GM10248 (cell line): ENCODE measurements at regions of chr20 and their contacts with region 1.

Region 1: DNA sequence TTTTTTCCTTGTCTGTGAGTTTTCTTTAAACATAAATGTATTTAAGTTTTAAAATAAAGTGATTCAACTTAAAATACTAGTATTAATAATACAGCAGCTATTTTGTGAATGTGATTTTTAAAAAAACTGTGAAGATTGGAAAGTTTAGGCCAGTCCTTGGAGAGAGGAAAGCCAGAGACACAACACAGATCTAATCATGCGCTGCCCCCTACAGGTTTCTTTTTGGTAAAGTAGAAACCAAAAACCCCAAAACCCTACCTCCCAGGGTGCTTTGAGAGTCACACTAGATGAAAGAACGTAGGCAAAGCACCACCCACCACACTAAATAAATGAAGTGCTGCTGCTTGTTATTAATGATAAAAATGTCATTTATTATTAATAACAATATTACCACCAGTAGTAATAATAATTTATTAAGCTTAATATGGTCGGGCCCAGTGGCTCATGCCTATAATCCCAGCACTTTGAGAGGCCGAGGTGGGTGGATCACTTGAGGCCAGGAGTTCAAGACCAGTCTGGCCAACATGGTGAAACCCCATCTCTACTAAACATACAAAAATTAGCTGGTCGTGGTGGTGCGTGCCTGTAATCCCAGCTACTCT is 33.7 kb downstream of the SLC9A8 start:
- DNase-seq: peak; percentile 71
- CTCF ChIP-seq: peak; percentile 46

Region 2: DNA sequence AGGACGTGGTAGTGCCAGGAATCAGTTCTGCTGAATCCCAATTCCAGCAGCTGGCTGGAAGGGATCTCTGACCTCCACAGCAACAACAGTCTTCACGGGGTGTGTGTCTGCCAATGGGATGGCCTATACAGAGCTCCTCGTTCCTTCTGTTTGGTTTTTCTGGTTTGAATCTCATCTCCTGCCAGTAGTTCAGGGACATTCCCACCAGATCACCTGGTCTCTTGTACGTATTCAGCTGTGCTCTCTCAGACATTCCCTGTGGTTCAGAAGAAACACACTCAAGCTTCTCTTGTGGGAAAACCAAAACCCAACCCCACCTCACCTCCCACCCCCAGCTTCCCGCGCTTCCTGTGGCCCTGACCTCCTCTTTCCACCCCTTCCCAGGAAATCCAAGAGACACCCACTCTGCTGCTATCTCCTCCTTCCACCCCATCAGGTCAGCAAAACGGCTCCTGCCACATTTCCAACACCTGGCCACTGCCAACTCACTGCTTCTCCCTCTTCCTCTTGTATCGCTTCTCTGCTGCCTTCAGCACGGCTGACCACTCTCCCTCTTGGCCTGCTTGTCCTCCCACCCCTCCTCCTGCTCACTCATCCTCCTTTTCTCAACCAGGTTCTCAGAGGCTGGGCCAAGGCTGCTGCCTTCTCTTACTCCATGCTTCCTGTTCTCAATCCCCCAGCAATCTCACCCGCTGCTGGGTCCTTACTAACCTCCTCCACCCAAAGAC is 215.1 kb before region 1 on chr20:
- CTCF ChIA-PET with region 1: interaction called, 10 read pairs
- POLR2A ChIA-PET with region 1: no interaction called
- DNase-seq: peak; percentile 60
- CTCF ChIP-seq: no peak

Region 3: DNA sequence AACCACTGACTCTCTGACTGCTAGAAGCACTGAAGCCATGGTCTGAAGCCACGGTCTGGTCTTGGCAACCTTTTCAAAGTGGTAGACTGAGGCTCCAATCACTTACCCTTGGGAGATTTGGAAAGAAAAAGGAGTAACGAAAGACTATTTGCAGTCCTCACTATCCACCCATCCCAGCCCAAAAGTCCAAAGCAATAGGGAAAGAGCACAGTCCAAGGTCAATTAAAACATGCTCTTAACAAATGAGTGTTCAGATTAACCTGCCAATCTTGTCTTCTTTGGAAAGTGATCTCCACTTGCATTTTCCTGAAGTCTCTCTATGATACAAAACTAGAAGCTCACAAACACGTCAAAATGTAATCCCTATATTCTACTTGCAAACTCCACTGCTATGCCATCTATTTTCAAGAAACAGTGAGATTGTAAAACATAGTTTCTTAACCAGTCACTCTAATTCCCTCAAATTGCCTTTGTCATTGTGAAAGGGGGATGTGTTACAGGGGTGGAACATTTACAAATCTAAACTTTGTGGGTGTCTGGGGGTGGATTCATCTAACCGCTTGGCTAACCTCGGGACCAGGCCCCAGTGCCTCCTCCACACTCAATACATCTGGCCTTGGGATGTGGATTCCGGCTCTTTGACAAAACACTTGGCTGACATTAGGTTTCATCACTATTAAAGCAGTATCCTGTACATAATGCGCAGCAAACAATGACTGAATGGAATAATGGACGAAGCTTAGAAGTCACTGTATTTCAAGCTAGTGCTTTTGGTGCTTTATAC is 189.0 kb before region 1 on chr20:
- CTCF ChIA-PET with region 1: interaction called, 11 read pairs
- POLR2A ChIA-PET with region 1: no interaction called
- DNase-seq: no peak
- CTCF ChIP-seq: no peak

Region 4: DNA sequence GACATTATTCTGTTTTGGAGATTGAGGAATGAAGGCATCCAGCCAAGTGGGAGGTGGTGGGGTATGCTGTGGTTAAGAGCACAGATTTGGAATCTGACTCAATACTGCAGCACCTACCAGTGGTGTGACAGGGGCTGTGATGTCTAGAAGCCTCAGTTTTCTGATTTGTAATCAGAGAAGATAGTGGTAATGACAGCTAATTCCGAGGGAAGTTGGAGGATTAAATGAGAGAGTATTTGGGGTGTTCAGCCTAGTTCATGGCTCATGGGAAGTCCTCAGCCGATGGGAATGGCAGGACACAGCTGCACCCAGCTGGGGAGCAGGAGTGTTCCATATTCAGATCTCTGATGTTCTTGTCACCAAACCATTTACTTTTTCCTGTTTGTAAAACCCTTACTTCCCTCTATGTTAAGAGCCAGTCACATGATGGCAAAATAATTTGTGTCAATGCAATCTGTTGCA is 24.4 kb before region 1 on chr20:
- CTCF ChIA-PET with region 1: interaction called, 10 read pairs
- POLR2A ChIA-PET with region 1: no interaction called
- DNase-seq: no peak
- CTCF ChIP-seq: peak; percentile 40

Region 5: GRCh38 chr20:49832632-49833327 is 13.5 kb before region 1 on chr20:
- CTCF ChIA-PET with region 1: interaction called, 37 read pairs
- POLR2A ChIA-PET with region 1: no interaction called
- DNase-seq: no peak
- CTCF ChIP-seq: no peak

Region 6: DNA sequence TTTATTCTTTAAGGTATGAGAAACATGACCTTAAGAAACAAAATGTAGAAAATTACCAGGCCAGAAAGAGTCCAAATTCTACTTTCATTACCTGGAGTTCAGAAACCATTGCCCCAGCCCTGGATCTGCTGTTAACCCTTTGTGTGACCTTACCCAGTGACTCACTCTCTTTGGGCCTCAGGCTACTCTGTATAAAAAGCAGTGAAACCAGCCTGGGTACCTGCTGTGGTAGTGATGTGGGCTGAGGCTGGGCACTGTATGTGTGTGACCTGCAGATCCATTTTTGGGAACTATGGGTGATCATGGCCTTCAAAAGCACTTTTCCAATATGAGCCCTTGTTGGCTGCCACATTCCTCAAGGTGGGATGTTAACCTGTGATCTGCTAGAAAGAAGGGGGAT is 13.5 kb after region 1 on chr20:
- CTCF ChIA-PET with region 1: interaction called, 24 read pairs
- POLR2A ChIA-PET with region 1: no interaction called
- DNase-seq: no peak
- CTCF ChIP-seq: no peak